Left lung (tissue), 14 donors: ENCODE measurements at regions of chr1 and their contacts with region 1.

Region 1: GRCh38 chr1:33228935-33229487 is 27.3 kb upstream of the ZNF362 start:
- DNase-seq: peak in 2 of 4 donors; percentile 62 to 82
- ATAC-seq: peak; percentile 70
- H3K4me3 ChIP-seq: no peak overlapping the region
- H3K27ac ChIP-seq: no peak overlapping the region
- H3K4me1 ChIP-seq: peaks cover 0 to 3% of the 10 kb centered on the region in 2 donors
- H3K27me3 ChIP-seq: no peaks in the 10 kb centered on the region
- CTCF ChIP-seq: no peak

Region 2: GRCh38 chr1:33367485-33368405 is 138.7 kb after region 1 on chr1:
- intact Hi-C with region 1: loop called in 1 of 2 experiments (anchors 10 kb)
- DNase-seq: peak; percentile 76 to 98 (median 90)
- ATAC-seq: peak; percentile 92
- H3K4me3 ChIP-seq: no peak overlapping the region
- H3K27ac ChIP-seq: peak overlapping the region in 1 of 2 donors; percentile 54
- H3K4me1 ChIP-seq: peaks cover 3 to 29% of the 10 kb centered on the region in 2 donors
- H3K27me3 ChIP-seq: no peaks in the 10 kb centered on the region
- CTCF ChIP-seq: peak; percentile 94 to 95